ENCODE measurements at regions of chr20 and their contacts with region 1.

Region 1: DNA sequence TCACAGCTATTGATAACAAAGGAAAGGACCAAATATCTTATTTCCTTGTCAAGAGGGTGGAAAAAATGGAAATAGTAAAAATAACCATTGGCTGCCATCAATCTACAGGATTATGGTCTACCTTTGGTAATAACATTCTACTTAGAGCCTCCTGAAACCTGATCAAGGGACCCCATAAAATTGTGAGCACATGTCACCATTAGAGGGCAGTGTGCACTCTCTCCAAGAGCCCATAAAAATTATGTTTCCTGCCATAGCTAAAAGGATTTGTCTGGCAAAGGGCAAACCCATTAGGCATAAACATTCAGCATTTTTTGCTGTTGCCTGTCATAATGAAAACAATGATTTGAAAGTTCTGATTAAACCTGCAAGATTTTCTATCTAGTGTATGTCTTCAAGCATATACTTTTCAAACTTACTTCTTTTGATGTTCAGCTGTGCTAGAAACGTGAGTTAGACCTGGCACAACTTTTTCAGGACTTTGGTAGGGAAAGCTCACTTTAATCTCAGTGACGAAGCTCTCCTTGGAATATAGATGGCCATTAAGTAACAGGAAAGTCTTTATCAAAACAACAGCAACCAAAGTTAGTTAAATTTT is 120.7 kb upstream of the ZFP64 start:
- DNase-seq: peak; percentile 60
- H3K4me3 Mint-ChIP-seq: no peak overlapping the region
- H3K27ac Mint-ChIP-seq: no peak overlapping the region
- H3K4me1 Mint-ChIP-seq: peaks cover 14% of the 10 kb centered on the region
- H3K27me3 Mint-ChIP-seq: no peaks in the 10 kb centered on the region

Region 2: GRCh38 chr20:52201395-52201794 is 110.8 kb before region 1 on chr20:
- CTCF ChIA-PET with region 1: no interaction called
- POLR2A ChIA-PET with region 1: no interaction called
- intact Hi-C with region 1: no loop called
- DNase-seq: no peak
- H3K4me3 Mint-ChIP-seq: no peak overlapping the region
- H3K27ac Mint-ChIP-seq: no peak overlapping the region
- H3K4me1 Mint-ChIP-seq: no peaks in the 10 kb centered on the region
- H3K27me3 Mint-ChIP-seq: no peaks in the 10 kb centered on the region

Region 3: GRCh38 chr20:52242237-52243230 is 69.7 kb before region 1 on chr20:
- CTCF ChIA-PET with region 1: interaction called, 4 read pairs
- POLR2A ChIA-PET with region 1: no interaction called
- intact Hi-C with region 1: loop called (anchors 2 kb)
- DNase-seq: no peak
- H3K4me3 Mint-ChIP-seq: no peak overlapping the region
- H3K27ac Mint-ChIP-seq: no peak overlapping the region
- H3K4me1 Mint-ChIP-seq: no peaks in the 10 kb centered on the region
- H3K27me3 Mint-ChIP-seq: peaks cover 2% of the 10 kb centered on the region

Region 4: DNA sequence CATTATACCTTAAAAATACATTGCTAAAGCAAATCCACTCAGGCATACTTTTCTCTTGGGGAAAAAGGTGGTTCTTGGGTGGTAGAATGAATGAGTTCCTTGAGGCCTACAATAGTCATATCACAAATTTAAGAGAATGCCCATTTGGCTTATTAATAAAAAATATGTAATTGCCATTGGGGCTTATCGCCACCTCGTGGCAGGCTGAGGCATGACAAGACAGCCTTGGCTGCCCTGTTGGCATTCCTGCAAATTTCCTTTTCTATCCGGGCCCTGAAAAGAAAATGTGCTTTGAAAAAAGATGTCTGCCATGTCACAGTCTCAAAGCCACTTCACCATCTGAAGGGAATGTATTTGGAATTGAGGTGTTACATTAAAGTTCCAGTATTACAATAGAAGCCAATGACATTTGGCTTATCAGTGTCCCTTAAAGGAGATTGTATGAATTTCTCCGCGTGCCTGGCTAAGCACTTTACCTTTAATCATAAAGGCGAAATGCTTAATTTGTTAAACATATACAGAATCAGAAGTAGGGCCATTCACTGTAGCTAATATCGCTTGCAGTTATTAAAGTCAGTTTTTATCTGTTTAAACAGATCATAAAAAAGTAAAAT is 67.6 kb after region 1 on chr20:
- CTCF ChIA-PET with region 1: interaction called, 19 read pairs
- POLR2A ChIA-PET with region 1: interaction called, 3 read pairs
- intact Hi-C with region 1: loop called (anchors 2 kb)
- DNase-seq: peak; percentile 40
- H3K4me3 Mint-ChIP-seq: no peak overlapping the region
- H3K27ac Mint-ChIP-seq: no peak overlapping the region
- H3K4me1 Mint-ChIP-seq: peaks cover 14% of the 10 kb centered on the region
- H3K27me3 Mint-ChIP-seq: no peaks in the 10 kb centered on the region

Region 5: GRCh38 chr20:52539891-52540290 is 227.7 kb after region 1 on chr20:
- CTCF ChIA-PET with region 1: no interaction called
- POLR2A ChIA-PET with region 1: no interaction called
- intact Hi-C with region 1: no loop called
- DNase-seq: no peak
- H3K4me3 Mint-ChIP-seq: no peak overlapping the region
- H3K27ac Mint-ChIP-seq: no peak overlapping the region
- H3K4me1 Mint-ChIP-seq: no peaks in the 10 kb centered on the region
- H3K27me3 Mint-ChIP-seq: peaks cover 1% of the 10 kb centered on the region

Region 6: DNA sequence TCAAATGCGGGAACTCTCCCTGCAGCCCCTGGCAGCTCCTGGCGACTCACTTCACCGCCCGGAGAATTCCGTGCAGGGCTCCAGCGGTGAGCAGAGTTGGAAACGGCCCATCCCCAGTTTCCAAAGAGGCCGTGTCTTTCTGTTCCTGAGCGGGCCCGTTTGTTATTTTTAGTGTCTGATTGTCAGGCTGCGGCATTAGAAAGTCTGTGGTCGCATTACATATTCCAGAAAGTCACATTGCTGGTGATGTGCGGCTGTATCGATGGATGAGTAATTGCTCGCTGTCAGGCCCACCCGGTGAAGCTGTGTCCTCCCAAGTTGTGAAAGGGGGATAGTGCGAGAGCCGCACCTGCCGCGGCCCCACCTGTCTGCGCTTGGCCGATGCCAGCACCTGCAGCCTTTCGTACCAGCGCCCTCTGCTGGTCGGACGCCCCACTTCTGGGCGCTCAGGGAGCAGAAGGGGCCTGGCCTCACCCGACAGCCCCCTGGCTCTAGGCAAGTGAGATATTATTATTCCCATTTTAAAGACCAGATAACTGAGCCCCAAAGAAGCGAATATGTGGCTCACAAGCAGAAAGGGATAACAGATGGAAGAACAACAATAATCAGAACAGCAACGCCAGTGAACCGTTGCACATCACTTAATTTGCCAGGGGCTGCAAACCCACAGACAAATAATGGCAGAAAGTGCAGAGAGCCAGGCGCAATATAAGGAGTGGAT is 904.8 kb after region 1 on chr20:
- CTCF ChIA-PET with region 1: interaction called, 21 read pairs
- POLR2A ChIA-PET with region 1: no interaction called
- intact Hi-C with region 1: loop called (anchors 2 kb)
- DNase-seq: peak; percentile 83
- H3K4me3 Mint-ChIP-seq: no peak overlapping the region
- H3K27ac Mint-ChIP-seq: peak overlapping the region; percentile 72
- H3K4me1 Mint-ChIP-seq: peaks cover 51% of the 10 kb centered on the region
- H3K27me3 Mint-ChIP-seq: no peaks in the 10 kb centered on the region

Measured in activated CD4-positive, alpha-beta memory T cell treated with anti-CD3 and anti-CD28 coated beads for 36 hours (primary cell).